Adrenal gland (tissue), 19 donors: ENCODE measurements at regions of chr10 and their contacts with region 1.

Region 1: GRCh38 chr10:90148116-90148855 is 446.9 kb downstream of the KIF20B start:
- DNase-seq: no peak
- H3K4me3 ChIP-seq: no peak overlapping the region
- H3K27ac ChIP-seq: no peak overlapping the region
- H3K4me1 ChIP-seq: no peaks in the 10 kb centered on the region
- H3K27me3 ChIP-seq: no peaks in the 10 kb centered on the region
- CTCF ChIP-seq: peak; percentile 28 to 54 (median 47)
- POLR2A ChIP-seq: no peak

Region 2: DNA sequence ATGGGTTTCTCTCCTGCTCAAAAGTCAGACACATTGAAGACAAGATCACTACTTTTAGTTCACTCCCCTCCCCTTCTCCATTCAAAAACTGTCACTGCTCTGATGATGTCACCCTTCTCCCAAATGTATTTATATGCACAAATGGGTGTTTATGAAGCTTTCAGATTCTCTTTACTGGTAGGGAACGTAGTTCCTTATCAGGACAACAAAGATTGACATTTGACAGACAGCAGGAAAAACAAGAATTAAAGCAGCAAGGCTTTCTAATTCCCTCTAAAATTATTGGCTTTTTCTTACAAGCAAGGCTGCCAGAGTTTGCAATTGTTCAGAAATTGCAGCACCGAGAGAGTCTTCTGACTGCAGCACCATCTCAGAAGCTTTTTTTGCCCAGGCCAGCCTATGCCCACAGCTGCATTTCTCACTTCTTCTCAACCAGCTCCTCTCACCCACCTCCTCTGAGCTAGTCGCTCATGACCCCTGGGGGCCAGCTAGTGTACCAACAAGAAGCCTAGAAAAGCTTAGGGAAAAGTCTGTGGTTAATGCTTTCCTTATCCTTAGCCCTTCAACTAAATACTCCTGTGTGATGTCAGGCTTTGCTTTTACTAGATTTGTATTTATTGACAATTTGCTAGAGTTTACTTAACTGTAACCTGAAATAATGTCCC is 444.5 kb after region 1 on chr10:
- intact Hi-C with region 1: loop called in 1 of 2 experiments (anchors 10 kb)
- DNase-seq: peak; percentile 35 to 85 (median 67)
- H3K4me3 ChIP-seq: no peak overlapping the region
- H3K27ac ChIP-seq: no peak overlapping the region
- H3K4me1 ChIP-seq: peaks cover 12 to 22% of the 10 kb centered on the region in 2 donors
- H3K27me3 ChIP-seq: no peaks in the 10 kb centered on the region
- CTCF ChIP-seq: peak; percentile 29 to 71 (median 59)
- POLR2A ChIP-seq: no peak